Activated CD4-positive, alpha-beta memory T cell treated with anti-CD3 and anti-CD28 coated beads, Interleukin-2, amount 10 ng/mL, durations not matched to agents 7 days and 5 days (primary cell): ENCODE measurements at regions of chr22 and their contacts with region 1.

Region 1: DNA sequence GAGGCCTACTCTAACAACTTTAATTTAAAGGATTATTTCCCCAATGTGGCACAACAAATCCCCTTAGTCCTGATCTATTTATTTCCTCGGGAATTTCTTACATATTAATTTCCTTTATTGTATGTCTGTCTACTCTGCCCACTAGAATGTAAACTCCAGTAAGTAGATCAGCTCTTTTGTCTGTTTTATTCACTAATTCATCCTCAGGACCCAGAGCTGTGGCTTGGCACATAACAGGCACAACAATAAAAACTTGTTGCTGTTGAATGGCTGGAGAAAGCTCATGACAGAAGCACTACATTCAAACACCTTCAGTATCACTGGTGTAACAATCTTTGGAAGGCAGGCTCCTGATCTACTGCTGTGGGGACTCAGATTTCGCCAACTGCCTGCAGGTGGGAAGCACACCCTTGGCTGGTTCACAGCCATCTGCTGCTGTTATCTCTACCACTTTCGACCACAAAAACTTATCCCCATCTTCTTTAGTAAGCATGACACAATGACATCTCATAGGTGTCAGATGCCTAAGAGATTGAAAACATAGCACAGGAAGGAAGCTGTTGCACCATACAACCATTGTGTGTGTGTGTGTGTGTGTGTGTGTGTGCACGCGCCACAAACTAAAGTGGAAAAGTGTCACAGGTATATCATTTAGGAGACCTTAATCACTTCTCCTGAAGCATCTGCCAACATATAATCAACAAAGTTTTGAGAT is 11.9 kb downstream of the HIRA start:
- DNase-seq: peak; percentile 67
- H3K4me3 Mint-ChIP-seq: peak overlapping the region; percentile 12
- H3K27ac Mint-ChIP-seq: peak overlapping the region; percentile 87
- H3K4me1 Mint-ChIP-seq: peaks cover 71% of the 10 kb centered on the region
- H3K27me3 Mint-ChIP-seq: no peaks in the 10 kb centered on the region

Region 2: DNA sequence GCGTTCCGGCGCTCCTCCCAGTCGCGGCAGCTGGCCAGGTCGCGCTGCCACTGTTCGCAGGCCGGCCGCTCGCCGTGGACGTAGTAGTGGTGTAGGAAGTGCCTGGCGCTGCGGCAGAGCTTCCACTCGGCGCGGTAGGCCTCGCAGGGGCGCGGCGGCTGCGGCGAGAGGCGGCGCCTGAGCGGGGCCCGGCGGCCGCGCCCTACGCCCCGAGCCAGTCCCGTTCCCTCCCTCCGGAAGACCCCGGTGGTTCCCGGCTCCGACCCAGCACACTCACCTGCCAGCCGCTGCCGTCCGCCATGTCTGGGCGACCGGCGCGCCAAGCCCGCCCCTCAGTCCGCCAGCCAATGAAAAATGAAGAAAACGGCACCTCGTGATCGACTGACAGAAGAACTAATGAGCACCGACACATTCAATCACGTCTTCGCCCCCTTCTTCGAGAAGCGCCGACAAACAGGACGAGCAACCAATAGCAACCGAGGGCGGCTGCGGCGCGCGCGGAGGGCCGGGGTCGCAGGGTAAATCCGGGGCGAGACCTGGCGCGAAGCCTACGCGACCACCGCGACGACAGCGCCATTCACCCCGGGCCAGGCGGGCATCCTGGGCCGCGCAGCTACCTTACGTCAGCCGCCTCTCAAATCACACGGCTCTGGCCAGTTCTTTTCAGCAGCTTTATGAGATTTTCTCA is 27.9 kb after region 1 on chr22 and contains the start of gene C22orf39:
- CTCF ChIA-PET with region 1: no interaction called
- POLR2A ChIA-PET with region 1: interaction called, 11 read pairs
- DNase-seq: peak; percentile 91
- H3K4me3 Mint-ChIP-seq: peak within 1 kb of the TSS; percentile 80
- H3K27ac Mint-ChIP-seq: peak within 1 kb of the TSS; percentile 82
- H3K4me1 Mint-ChIP-seq: peaks cover 37% of the 10 kb centered on the region
- H3K27me3 Mint-ChIP-seq: no peaks in the 10 kb centered on the region
- total RNA-seq, gene C22orf39: 31.8 to 32.9 TPM